CD8-positive, alpha-beta T cell (primary cell): ENCODE measurements at regions of chr2 and their contacts with region 1.

Region 1: GRCh38 chr2:30421604-30422443 is 25.2 kb upstream of the LCLAT1 start:
- DNase-seq: peak in 6 of 9 experiments; percentile 27 to 81 (median 57)
- ATAC-seq: peak; percentile 45
- H3K4me3 ChIP-seq: peak overlapping the region in 1 of 2 experiments; percentile 26
- H3K4me3 Mint-ChIP-seq: peak overlapping the region; percentile 53
- H3K27ac ChIP-seq: peak overlapping the region; percentile 60 to 70
- H3K27ac Mint-ChIP-seq: peak overlapping the region; percentile 95
- H3K4me1 ChIP-seq: peaks cover 54% of the 10 kb centered on the region
- H3K4me1 Mint-ChIP-seq: peaks cover 51% of the 10 kb centered on the region
- H3K27me3 ChIP-seq: no peaks in the 10 kb centered on the region
- H3K27me3 Mint-ChIP-seq: no peaks in the 10 kb centered on the region
- CTCF ChIP-seq: no peak

Region 2: DNA sequence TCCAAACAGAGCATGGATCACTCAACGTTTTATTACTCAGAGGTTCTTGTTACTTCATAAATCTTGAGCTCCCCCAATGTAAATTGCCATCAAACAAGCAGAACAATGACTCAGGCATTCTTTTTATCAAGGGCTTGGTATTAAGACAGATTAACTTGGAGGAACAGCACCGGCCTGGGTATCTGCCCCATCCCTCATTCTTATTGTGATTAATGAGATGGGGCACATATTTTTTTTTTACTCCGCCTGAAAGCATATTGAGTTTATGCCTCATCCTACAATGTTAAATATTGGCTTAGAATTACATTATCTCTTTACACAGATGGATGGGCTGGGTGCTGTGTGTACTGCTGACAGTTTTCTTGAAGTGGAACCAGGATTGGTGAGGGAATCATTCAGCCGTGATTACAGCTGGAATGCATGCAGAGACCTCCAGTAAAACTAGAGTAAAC is 919.3 kb before region 1 on chr2:
- CTCF ChIA-PET with region 1: no interaction called
- POLR2A ChIA-PET with region 1: no interaction called
- intact Hi-C with region 1: no loop called
- DNase-seq: no peak
- ATAC-seq: no peak
- H3K4me3 ChIP-seq: no peak overlapping the region
- H3K4me3 Mint-ChIP-seq: no peak overlapping the region
- H3K27ac ChIP-seq: no peak overlapping the region
- H3K27ac Mint-ChIP-seq: no peak overlapping the region
- H3K4me1 ChIP-seq: no peaks in the 10 kb centered on the region
- H3K4me1 Mint-ChIP-seq: no peaks in the 10 kb centered on the region
- H3K27me3 ChIP-seq: no peaks in the 10 kb centered on the region
- H3K27me3 Mint-ChIP-seq: peaks cover 26% of the 10 kb centered on the region
- CTCF ChIP-seq: no peak

Region 3: GRCh38 chr2:30146438-30147147 is 275.2 kb before region 1 on chr2 and contains the start of gene YPEL5:
- CTCF ChIA-PET with region 1: no interaction called
- POLR2A ChIA-PET with region 1: no interaction called
- intact Hi-C with region 1: loop called in 1 of 2 experiments (anchors 2 kb)
- DNase-seq: peak; percentile 99 to 100 (median 100)
- ATAC-seq: peak; percentile 82
- H3K4me3 ChIP-seq: peak within 1 kb of the TSS; percentile 75 to 76
- H3K4me3 Mint-ChIP-seq: peak within 1 kb of the TSS; percentile 89
- H3K27ac ChIP-seq: peak within 1 kb of the TSS; percentile 97 to 100
- H3K27ac Mint-ChIP-seq: peak within 1 kb of the TSS; percentile 100
- H3K4me1 ChIP-seq: peaks cover 50% of the 10 kb centered on the region
- H3K4me1 Mint-ChIP-seq: peaks cover 60% of the 10 kb centered on the region
- H3K27me3 ChIP-seq: no peaks in the 10 kb centered on the region
- H3K27me3 Mint-ChIP-seq: no peaks in the 10 kb centered on the region
- CTCF ChIP-seq: no peak
- total RNA-seq, gene YPEL5: 1,051 to 1,071 TPM

Region 4: DNA sequence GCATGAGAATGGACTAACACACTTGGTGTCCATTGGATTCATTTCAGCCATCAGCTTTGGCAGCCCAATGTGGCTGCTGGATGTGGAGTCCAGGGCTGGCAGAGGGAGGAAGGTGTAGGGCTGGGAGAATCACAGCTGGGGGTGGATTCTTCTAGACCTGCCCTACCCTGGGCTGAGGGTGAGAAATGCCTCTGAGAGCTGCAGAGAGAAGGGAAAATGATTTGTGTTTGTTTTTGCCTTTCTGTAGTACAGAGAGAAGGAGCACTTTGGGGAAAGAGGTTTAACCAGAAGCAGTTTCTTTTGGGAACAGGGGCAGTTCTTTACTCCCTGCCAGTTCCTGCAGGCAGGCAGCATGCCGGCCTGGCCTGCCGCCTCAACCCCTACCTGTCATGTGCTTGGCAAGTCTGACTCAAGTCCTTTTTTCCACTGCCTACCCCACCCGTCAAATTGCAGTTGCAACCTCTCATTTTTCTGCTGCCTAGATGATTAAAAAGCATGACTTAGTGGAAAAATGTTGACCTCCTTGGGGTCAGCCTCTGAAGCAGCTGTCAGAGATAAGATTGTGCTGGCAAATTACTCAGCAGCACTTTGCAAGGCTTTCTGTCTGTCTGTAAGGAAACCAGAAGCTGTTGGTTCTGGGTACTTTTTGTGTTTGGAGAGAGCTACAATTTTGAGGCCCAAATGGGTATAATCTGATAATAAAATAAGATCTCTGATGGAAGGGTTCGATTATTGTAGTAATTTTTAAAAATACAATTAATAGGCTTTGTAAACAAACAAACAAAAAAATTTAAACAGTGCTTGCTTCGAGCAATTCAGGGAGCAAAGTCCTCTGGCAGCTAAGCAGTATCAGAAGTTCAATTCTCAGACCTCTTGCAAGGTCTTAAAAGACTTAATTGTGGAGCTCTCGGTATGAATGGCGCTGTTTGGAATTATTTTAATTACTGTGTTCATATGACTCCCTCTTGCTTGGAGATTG is 168.8 kb before region 1 on chr2:
- CTCF ChIA-PET with region 1: interaction called, 6 read pairs
- POLR2A ChIA-PET with region 1: no interaction called
- intact Hi-C with region 1: loop called in 1 of 2 experiments (anchors 5 kb)
- DNase-seq: peak in 7 of 9 experiments; percentile 36 to 64 (median 55)
- ATAC-seq: peak; percentile 37
- H3K4me3 ChIP-seq: peak overlapping the region in 1 of 2 experiments; percentile 17
- H3K4me3 Mint-ChIP-seq: peak overlapping the region; percentile 46
- H3K27ac ChIP-seq: peak overlapping the region; percentile 28 to 68
- H3K27ac Mint-ChIP-seq: peak overlapping the region; percentile 98
- H3K4me1 ChIP-seq: peaks cover 97% of the 10 kb centered on the region
- H3K4me1 Mint-ChIP-seq: peaks cover 96% of the 10 kb centered on the region
- H3K27me3 ChIP-seq: no peaks in the 10 kb centered on the region
- H3K27me3 Mint-ChIP-seq: no peaks in the 10 kb centered on the region
- CTCF ChIP-seq: no peak

Region 5: GRCh38 chr2:30366199-30366691 is 55.6 kb before region 1 on chr2:
- CTCF ChIA-PET with region 1: interaction called, 3 read pairs
- POLR2A ChIA-PET with region 1: interaction called, 3 read pairs
- intact Hi-C with region 1: loop called in 1 of 2 experiments (anchors 5 kb)
- DNase-seq: peak in 6 of 9 experiments; percentile 25 to 68 (median 37)
- ATAC-seq: peak; percentile 70
- H3K4me3 ChIP-seq: no peak overlapping the region
- H3K4me3 Mint-ChIP-seq: no peak overlapping the region
- H3K27ac ChIP-seq: no peak overlapping the region
- H3K27ac Mint-ChIP-seq: peak overlapping the region; percentile 19
- H3K4me1 ChIP-seq: peaks cover 33% of the 10 kb centered on the region
- H3K4me1 Mint-ChIP-seq: peaks cover 49% of the 10 kb centered on the region
- H3K27me3 ChIP-seq: no peaks in the 10 kb centered on the region
- H3K27me3 Mint-ChIP-seq: no peaks in the 10 kb centered on the region
- CTCF ChIP-seq: no peak

Region 6: DNA sequence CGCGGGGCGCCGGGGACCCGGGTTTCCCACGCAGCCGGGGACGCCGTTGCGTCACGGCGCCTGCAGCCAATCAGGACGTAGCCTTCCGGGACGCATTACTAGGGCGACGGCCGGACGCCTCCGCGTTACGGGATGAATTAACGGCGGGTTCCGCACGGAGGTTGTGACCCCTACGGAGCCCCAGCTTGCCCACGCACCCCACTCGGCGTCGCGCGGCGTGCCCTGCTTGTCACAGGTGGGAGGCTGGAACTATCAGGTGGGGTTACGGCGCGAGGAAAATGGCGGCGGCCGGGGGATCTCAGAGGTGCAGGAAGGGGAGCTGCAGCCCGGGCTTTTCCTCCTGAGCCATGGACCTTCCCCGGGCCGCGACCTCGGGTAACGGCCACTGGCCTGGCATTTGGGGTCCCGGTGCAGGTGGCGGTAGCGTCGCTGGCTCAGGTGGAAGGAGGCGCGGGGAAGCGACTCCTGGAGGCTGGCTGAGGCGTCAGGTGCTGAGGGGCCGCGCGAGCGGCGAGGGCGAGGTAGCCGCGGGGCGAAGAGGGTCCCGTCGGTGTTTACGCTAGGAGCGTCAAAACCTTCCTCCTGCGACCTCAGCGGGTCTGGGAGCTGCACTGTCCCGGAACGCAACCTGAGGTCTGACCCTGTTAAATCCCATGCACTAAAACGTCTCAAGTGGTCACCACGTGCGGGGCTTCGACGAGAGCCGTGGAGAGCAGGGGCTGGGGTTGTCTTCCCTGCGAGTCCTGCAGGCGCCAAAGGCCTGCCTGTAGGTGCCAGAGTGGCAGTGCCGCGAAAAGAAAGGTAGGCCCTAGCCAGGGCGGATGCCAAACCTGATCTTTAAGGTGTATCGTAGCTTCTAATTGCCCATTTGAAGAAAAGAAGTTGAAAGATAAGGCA is 25.6 kb after region 1 on chr2 and contains the start of gene LCLAT1:
- CTCF ChIA-PET with region 1: interaction called, 3 read pairs
- POLR2A ChIA-PET with region 1: interaction called, 9 read pairs
- intact Hi-C with region 1: loop called (anchors 2 kb)
- DNase-seq: peak; percentile 66 to 95 (median 84)
- ATAC-seq: peak; percentile 88
- H3K4me3 ChIP-seq: peak within 1 kb of the TSS; percentile 87 to 99
- H3K4me3 Mint-ChIP-seq: peak within 1 kb of the TSS; percentile 94
- H3K27ac ChIP-seq: peak within 1 kb of the TSS; percentile 92 to 95
- H3K27ac Mint-ChIP-seq: peak within 1 kb of the TSS; percentile 98
- H3K4me1 ChIP-seq: peaks cover 20% of the 10 kb centered on the region
- H3K4me1 Mint-ChIP-seq: peaks cover 45% of the 10 kb centered on the region
- H3K27me3 ChIP-seq: no peaks in the 10 kb centered on the region
- H3K27me3 Mint-ChIP-seq: no peaks in the 10 kb centered on the region
- CTCF ChIP-seq: no peak
- total RNA-seq, gene LCLAT1: 11.3 to 12.1 TPM